Aorta (tissue), 5 donors: ENCODE measurements at regions of chr7 and their contacts with region 1.

Region 1: DNA sequence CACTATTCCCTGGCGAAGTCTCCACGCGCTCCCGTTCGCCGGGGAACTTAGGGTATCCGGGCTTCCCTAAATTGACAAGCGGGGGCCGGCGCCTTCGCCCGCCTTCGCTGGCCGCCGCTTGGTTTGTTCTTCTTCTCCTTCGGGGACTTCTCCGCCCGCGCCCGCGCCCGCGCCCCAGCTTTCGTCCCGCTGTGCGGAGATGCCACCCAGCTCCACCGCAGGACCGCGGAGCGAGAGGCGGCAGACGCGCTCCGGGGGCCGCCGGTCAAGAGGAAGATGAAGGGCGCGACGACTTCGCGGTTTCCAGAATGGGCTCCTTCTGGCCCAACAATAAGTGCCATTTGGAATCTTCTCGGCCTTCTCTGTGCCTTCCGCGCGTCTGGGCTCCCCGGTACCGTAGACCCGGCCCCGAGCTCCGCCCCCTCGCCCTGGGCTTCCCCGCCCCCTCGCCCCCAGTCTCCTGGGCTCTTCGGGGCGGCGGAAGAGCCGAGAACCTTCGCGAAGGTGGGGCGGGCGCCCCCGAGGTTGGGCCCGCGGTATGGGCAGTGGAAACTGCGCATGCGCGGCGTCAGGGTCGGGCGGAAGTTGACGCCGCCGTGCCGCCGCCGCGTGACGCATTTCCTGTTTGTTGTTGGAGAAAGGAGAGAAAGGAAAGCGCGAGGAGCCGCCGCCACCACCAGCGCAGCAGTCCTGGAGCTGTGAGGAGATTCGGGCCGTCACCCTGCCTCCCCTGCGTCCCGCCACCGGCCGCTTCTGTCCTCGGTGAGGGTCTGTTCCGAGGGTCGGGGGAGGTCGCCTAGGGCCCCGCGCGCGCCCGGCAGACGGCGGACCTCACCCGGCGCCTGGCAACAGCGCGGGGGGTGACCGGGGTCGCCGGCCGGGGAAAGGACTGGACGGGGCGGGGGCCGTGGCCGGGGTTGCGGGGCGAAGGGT is at the start of gene DNAJB6:
- DNase-seq: peak; percentile 97 to 98
- ATAC-seq: peak; percentile 95
- H3K4me3 ChIP-seq: peak within 1 kb of the TSS; percentile 87 to 95
- H3K27ac ChIP-seq: peak within 1 kb of the TSS; percentile 83 to 97
- H3K4me1 ChIP-seq: peaks cover 0 to 2% of the 10 kb centered on the region in 2 donors
- H3K27me3 ChIP-seq: no peaks in the 10 kb centered on the region
- total RNA-seq, gene DNAJB6: 130 to 143 TPM

Region 2: GRCh38 chr7:155653803-155654202 is 1682.8 kb before region 1 on chr7:
- intact Hi-C with region 1: loop called in 1 of 2 experiments (anchors 10 kb)
- DNase-seq: no peak
- ATAC-seq: no peak
- H3K4me3 ChIP-seq: no peak overlapping the region
- H3K27ac ChIP-seq: no peak overlapping the region
- H3K4me1 ChIP-seq: peaks cover 7 to 10% of the 10 kb centered on the region in 2 donors
- H3K27me3 ChIP-seq: no peaks in the 10 kb centered on the region

Region 3: GRCh38 chr7:157299613-157300368 is 36.9 kb before region 1 on chr7:
- intact Hi-C with region 1: no loop called
- DNase-seq: no peak
- ATAC-seq: peak; percentile 4
- H3K4me3 ChIP-seq: no peak overlapping the region
- H3K27ac ChIP-seq: no peak overlapping the region
- H3K4me1 ChIP-seq: no peaks in the 10 kb centered on the region
- H3K27me3 ChIP-seq: no peaks in the 10 kb centered on the region

Region 4: GRCh38 chr7:157386979-157387800 is 50.5 kb after region 1 on chr7:
- intact Hi-C with region 1: loop called in 1 of 2 experiments (anchors 2 kb)
- DNase-seq: peak; percentile 89 to 93
- ATAC-seq: peak; percentile 89
- H3K4me3 ChIP-seq: no peak overlapping the region
- H3K27ac ChIP-seq: peak overlapping the region in 1 of 2 donors; percentile 71
- H3K4me1 ChIP-seq: no peaks in the 10 kb centered on the region
- H3K27me3 ChIP-seq: no peaks in the 10 kb centered on the region

Region 5: GRCh38 chr7:157397731-157398691 is 61.4 kb after region 1 on chr7:
- intact Hi-C with region 1: loop called in 1 of 2 experiments (anchors 5 kb)
- DNase-seq: peak in 1 of 2 donors; percentile 80
- ATAC-seq: peak; percentile 58
- H3K4me3 ChIP-seq: no peak overlapping the region
- H3K27ac ChIP-seq: peak overlapping the region; percentile 38 to 87
- H3K4me1 ChIP-seq: no peaks in the 10 kb centered on the region
- H3K27me3 ChIP-seq: no peaks in the 10 kb centered on the region

Region 6: DNA sequence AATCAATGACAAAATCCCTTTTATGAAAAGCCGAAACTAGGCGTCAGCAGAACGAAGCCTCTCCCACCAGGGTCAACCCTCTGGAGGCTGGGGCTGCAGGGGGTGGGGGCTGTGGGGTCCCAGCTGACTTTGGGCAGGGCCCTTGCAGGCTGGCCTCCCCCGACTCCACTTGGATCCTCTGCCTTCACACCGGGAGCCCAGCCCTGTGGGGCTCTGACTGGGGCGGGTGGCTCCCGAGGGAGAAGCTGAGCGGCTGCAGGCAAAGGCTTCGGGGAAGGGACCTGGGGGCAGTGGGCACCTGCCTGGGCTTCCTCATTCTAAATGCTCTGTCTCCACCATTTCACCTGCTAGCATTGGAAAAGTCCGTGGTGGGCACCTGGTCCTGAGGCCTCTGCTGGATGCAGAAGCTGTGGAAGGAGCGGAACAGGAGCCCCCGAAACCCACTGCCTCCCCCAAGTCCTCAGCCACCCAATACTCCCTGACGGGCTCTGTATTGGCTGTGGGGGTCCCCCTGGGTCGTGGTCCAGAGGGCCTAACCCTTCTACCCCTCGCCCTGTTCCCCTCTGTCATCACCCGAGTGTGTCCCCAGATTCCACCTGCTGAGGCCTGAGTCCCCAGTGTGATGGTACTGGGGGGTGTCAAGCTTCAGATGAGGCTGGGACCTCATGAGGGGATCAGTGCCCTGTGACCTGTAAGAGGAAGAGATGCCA is 108.8 kb after region 1 on chr7:
- intact Hi-C with region 1: no loop called
- DNase-seq: peak; percentile 26 to 47
- ATAC-seq: no peak
- H3K4me3 ChIP-seq: no peak overlapping the region
- H3K27ac ChIP-seq: no peak overlapping the region
- H3K4me1 ChIP-seq: no peaks in the 10 kb centered on the region
- H3K27me3 ChIP-seq: no peaks in the 10 kb centered on the region